A549 (cell line): ENCODE measurements at regions of chrX and their contacts with region 1.

Region 1: GRCh38 chrX:10189317-10190268 is 32.8 kb downstream of the CLCN4 start:
- DNase-seq: peak; percentile 70 to 77
- ATAC-seq: peak; percentile 93 to 97
- H3K4me3 ChIP-seq: 0 out of 3 replicates have a peak overlapping the region, but pooled peaks have one; percentile 15
- H3K27ac ChIP-seq: peak overlapping the region; percentile 58 to 80
- H3K4me1 ChIP-seq: peaks cover 14% of the 10 kb centered on the region
- CTCF ChIP-seq: peak; percentile 78
- EP300 ChIP-seq: no peak
- POLR2A ChIP-seq: no peak
- RAD21 ChIP-seq: peak; percentile 89 to 90

Region 2: DNA sequence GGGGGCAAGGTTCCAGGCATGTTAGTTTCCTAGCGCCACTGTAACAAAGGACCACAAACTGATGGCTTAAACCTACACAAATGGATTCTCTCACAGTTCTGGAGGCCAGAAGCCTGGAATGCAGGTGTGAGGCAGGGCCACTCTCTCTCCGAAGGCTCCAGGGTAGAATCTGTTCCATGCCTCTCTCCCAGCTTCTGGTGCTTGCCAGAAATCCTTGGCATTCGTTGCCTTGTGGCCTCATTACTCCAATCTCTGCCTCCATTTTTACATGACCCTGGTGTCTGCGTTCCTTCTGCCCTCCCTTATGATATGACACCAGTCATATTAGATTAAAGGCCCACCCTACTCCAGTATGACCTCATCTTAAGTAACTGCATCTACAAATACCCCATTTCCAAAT is 182.8 kb before region 1 on chrX:
- CTCF ChIA-PET with region 1: no interaction called
- POLR2A ChIA-PET with region 1: no interaction called
- DNase-seq: no peak
- ATAC-seq: no peak
- H3K4me3 ChIP-seq: no peak overlapping the region
- H3K27ac ChIP-seq: peak overlapping the region; percentile 29 to 84; a peak in 5 of 6 replicates
- H3K4me1 ChIP-seq: peaks cover 65% of the 10 kb centered on the region
- CTCF ChIP-seq: no peak
- EP300 ChIP-seq: no peak
- POLR2A ChIP-seq: no peak
- RAD21 ChIP-seq: no peak

Region 3: GRCh38 chrX:10166731-10167151 is 22.9 kb before region 1 on chrX:
- CTCF ChIA-PET with region 1: interaction called, 12 read pairs
- POLR2A ChIA-PET with region 1: no interaction called
- DNase-seq: no peak
- ATAC-seq: no peak
- H3K4me3 ChIP-seq: no peak overlapping the region
- H3K27ac ChIP-seq: no peak overlapping the region
- H3K4me1 ChIP-seq: no peaks in the 10 kb centered on the region
- CTCF ChIP-seq: no peak
- EP300 ChIP-seq: no peak
- POLR2A ChIP-seq: no peak
- RAD21 ChIP-seq: no peak

Region 4: DNA sequence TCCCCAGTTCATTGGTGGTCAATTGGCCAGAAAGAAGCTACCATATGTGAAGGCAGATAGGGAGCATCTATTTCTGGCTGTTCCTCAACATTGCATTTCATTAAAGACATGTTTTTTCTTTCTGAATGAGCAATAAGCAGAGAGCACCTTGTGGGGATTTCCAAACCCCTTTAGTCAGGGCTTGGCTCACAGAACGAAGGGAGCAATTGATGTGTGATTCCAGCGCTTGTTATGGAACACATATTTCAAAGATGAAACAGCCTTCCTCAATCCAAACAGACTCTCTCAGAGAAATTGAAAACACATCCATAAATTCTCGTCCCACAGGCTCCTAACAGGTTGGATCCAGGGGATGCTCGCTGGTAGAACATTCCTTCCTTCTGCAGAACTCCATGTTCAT is 51.3 kb after region 1 on chrX:
- CTCF ChIA-PET with region 1: interaction called, 11 read pairs
- POLR2A ChIA-PET with region 1: no interaction called
- DNase-seq: peak in 1 of 2 experiments; percentile 12
- ATAC-seq: peak in 1 of 2 experiments; percentile 56; a peak in 3 of 6 replicates
- H3K4me3 ChIP-seq: no peak overlapping the region
- H3K27ac ChIP-seq: peak overlapping the region in 1 of 2 experiments; percentile 78; a peak in 3 of 6 replicates
- H3K4me1 ChIP-seq: peaks cover 21% of the 10 kb centered on the region
- CTCF ChIP-seq: no peak
- EP300 ChIP-seq: no peak
- POLR2A ChIP-seq: no peak
- RAD21 ChIP-seq: no peak

Region 5: DNA sequence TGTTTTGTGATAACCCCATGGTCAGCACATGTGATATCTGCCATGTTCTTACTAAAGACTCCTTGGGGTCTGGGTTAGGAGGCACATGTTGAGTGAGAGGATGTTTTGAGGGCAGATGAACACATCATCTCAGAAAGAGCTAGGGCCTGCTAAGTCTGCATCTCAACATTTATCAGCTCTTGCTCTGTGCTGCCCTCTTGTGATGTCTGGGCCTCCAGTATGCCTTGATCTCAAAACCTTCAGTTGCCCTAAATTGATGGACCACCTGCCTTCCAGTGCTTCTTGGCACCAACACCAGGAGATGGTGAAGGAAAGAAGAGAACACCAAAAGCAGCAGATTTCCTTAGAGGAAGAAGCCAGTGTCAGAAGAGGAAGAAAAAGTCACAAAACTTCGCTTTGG is 408.3 kb after region 1 on chrX:
- CTCF ChIA-PET with region 1: interaction called, 14 read pairs
- POLR2A ChIA-PET with region 1: no interaction called
- DNase-seq: peak in 1 of 2 experiments; percentile 67
- ATAC-seq: peak; percentile 76 to 88; a peak in 5 of 6 replicates
- H3K4me3 ChIP-seq: no peak overlapping the region
- H3K27ac ChIP-seq: peak overlapping the region; percentile 67 to 82
- H3K4me1 ChIP-seq: peaks cover 74% of the 10 kb centered on the region
- CTCF ChIP-seq: peak; percentile 49; the same call in 2 of the 3 replicates
- EP300 ChIP-seq: no peak
- POLR2A ChIP-seq: no peak
- RAD21 ChIP-seq: peak; percentile 57 to 63

Region 6: GRCh38 chrX:10653302-10653701 is 463.7 kb after region 1 on chrX:
- CTCF ChIA-PET with region 1: interaction called, 17 read pairs
- POLR2A ChIA-PET with region 1: no interaction called
- DNase-seq: no peak
- ATAC-seq: no peak
- H3K4me3 ChIP-seq: no peak overlapping the region
- H3K27ac ChIP-seq: no peak overlapping the region
- H3K4me1 ChIP-seq: no peaks in the 10 kb centered on the region
- CTCF ChIP-seq: no peak
- EP300 ChIP-seq: no peak
- POLR2A ChIP-seq: no peak
- RAD21 ChIP-seq: no peak

Region 7: DNA sequence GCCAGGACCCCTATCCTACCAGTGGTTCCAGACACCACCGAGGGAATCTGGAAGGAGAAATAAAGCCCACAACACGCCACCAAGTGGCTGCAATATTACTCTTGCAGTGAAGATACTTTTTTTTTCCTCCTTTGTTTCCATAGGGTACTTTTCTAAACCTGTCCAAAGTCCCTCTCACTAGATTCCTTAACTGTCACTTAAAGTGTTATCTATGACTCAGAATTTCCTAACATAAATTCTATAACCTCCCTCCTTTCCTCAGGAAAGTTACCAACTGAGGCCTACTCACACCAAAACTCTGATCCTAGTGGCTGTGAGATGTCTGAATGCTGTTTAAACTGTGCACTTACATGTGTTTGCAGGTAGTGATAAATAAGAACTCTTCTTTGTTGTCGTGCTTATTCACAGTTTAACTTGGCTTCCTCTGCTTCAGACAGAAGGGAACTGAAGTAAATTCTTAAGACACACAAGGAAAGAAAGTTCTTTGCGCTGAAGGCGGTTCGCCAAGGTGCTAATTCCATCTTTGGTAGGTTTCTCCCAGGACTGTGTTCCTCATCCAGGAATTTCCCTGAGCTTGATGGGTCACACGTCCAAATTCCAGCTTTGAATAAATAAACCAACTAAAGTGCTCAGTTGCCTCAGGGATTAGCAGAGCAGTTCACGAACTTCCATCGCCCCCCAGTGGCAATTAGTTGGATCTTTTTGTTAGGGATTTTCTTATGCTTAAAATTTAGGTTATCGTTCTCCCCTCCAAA is 910.9 kb after region 1 on chrX:
- CTCF ChIA-PET with region 1: interaction called, 26 read pairs
- POLR2A ChIA-PET with region 1: no interaction called
- DNase-seq: peak; percentile 36 to 73
- ATAC-seq: peak; percentile 83 to 94
- H3K4me3 ChIP-seq: no peak overlapping the region
- H3K27ac ChIP-seq: peak overlapping the region; percentile 63 to 83
- H3K4me1 ChIP-seq: peaks cover 11% of the 10 kb centered on the region
- CTCF ChIP-seq: peak; percentile 66
- EP300 ChIP-seq: no peak
- POLR2A ChIP-seq: no peak
- RAD21 ChIP-seq: peak; percentile 75 to 79